ENCODE measurements at regions of chr2 and their contacts with region 1.

Region 1: GRCh38 chr2:38581193-38582147 is 21.3 kb downstream of the HNRNPLL start:
- DNase-seq: no peak
- H3K4me3 ChIP-seq: no peak overlapping the region
- H3K27me3 ChIP-seq: no peaks in the 10 kb centered on the region
- CTCF ChIP-seq: peak; percentile 56

Region 2: DNA sequence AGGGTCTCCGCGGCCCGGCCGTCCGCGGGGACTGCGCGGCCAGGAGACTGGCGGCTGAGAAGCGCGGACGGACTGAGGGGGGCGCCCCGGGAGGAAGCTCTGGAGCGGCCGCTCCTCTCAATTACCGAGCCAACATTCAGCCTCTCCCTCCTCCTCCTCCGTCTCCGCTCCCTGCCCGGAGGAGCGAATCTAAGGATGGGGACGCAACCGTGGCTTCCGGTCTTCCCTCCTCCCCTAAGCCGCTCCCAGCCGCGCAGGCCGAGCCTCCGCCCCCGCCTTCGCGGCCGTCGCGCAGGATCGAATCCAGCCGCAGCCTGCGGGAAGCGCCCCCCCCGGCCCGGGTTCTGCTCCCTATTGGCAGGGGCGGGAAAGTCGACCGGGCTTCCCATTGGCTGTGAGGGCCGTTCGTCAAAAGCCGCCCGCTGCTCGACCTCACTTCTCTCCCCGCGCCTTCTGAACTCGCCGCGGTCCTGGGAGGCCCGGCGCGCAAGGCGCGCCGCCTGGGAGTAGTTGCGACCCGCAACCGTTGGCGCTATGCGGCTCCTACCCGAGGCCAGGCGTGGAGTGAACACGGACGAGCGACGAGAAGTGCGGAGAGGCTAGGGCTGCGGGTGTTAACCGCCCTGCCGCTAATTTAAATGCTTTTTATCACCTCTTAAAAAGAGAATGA is 21.4 kb after region 1 on chr2 and contains the start of gene HNRNPLL:
- CTCF ChIA-PET with region 1: interaction called, 13 read pairs
- POLR2A ChIA-PET with region 1: no interaction called
- DNase-seq: peak; percentile 82
- H3K4me3 ChIP-seq: peak within 1 kb of the TSS; percentile 90
- H3K27me3 ChIP-seq: no peaks in the 10 kb centered on the region
- CTCF ChIP-seq: no peak
- polyA plus RNA-seq, gene HNRNPLL: 26.6 and 49.7 TPM in 2 replicates

Region 3: DNA sequence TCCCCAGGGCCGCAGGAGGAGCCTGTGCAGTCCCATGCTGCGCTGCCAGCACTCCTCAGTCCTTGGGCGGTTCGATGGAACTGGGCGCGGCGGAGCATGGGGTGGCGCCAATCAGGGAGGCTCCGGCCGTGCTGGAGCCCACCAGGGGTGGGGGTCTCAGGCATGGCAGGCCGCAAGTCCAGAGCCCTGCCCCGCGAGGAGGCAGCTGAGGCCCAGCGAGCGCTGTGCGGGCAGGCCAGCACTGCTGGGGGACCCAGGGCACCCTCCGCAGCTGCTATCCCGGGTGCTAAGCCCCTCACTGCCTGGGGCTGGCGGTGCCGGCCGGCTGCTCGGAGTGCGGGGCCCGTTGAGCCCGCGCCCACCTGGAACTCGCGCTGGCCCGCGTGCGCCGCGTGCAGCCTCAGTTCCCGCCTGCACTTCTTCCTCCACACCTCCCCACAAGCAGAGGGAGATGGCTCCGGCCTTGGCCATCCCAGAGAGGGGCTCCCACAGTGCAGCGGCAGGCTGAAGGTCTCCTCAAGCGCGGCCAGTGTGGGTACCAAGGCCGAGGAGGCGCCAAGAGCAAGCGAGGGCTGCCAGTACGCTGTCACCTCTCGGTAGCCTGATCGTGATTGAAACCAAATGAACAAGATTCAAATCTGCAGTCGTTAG is 61.7 kb after region 1 on chr2:
- CTCF ChIA-PET with region 1: no interaction called
- POLR2A ChIA-PET with region 1: no interaction called
- DNase-seq: no peak
- H3K4me3 ChIP-seq: no peak overlapping the region
- H3K27me3 ChIP-seq: no peaks in the 10 kb centered on the region
- CTCF ChIP-seq: no peak

Region 4: GRCh38 chr2:38704664-38705063 is 123.2 kb after region 1 on chr2:
- CTCF ChIA-PET with region 1: interaction called, 10 read pairs
- POLR2A ChIA-PET with region 1: no interaction called
- DNase-seq: no peak
- H3K4me3 ChIP-seq: no peak overlapping the region
- H3K27me3 ChIP-seq: no peaks in the 10 kb centered on the region
- CTCF ChIP-seq: no peak

Region 5: DNA sequence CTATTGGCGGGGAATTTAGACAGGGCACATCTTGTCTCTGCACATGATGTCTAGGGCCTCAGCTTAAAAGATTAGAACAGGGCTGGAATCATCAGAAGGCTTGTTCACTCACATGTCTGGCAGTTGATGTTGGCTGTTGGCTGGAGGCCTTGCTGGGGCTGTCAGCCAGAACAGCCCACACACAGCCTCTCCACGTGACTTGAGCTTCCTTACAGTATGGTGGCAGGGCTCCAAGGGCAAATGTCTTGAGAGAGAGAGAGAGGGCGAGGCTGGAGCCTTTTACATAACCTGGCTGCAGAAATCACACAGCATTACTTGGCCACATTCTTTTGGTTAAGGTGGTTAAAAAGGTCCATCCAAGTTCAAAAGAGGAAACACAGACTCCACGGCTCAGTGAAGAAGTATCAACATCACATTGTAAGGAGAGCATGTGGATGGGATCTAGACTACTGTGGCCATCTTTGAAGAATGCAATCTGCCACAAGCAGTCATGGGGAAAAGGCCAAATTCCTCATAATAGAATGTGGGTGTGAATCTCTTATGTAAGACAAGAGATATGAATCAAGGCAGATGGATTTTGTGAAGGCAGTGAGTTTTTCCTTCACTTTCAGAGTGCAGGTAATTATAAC is 139.3 kb after region 1 on chr2:
- CTCF ChIA-PET with region 1: interaction called, 63 read pairs
- POLR2A ChIA-PET with region 1: no interaction called
- DNase-seq: peak; percentile 91
- H3K4me3 ChIP-seq: no peak overlapping the region
- H3K27me3 ChIP-seq: no peaks in the 10 kb centered on the region
- CTCF ChIP-seq: no peak

Region 6: DNA sequence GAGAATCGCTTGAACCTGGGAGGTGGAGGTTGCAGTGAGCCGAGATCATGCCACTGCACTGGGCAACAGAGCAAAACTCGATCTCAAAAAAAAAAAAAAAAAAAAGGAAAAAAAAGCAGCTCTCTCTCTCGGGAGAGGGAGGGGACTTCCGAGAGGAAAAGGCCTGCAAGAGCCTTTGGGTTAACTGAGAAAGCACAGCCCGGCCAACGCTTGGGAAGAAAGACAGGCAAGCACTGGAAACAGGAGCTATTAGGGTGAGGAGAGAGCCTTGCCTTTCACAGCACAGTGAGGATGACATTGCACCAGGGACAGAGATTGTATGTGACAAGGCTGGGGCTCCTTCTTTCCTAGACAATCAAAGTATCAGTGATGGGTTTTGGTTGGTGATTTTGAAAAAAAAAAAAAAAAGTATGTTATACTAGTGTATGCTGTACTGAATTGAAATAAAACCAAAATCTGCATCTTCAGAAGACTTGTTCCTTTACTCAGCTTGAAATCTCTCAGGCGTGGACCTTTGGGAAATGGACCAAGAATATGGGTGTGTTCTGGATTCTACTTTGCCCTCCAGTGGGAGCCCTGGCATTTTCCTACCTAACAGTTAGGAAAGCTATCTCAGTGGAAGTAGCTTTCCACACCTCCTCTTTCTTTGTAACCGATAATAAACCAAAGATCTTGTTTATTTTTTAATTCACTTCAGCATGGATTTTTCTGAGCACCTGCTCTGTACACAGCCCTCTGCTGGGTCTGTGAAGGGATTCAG is 153.0 kb after region 1 on chr2:
- CTCF ChIA-PET with region 1: interaction called, 23 read pairs
- POLR2A ChIA-PET with region 1: no interaction called
- DNase-seq: no peak
- H3K4me3 ChIP-seq: no peak overlapping the region
- H3K27me3 ChIP-seq: no peaks in the 10 kb centered on the region
- CTCF ChIP-seq: no peak

Measured in BJ (cell line).